ENCODE measurements at regions of chr13 and their contacts with region 1.

Region 1: DNA sequence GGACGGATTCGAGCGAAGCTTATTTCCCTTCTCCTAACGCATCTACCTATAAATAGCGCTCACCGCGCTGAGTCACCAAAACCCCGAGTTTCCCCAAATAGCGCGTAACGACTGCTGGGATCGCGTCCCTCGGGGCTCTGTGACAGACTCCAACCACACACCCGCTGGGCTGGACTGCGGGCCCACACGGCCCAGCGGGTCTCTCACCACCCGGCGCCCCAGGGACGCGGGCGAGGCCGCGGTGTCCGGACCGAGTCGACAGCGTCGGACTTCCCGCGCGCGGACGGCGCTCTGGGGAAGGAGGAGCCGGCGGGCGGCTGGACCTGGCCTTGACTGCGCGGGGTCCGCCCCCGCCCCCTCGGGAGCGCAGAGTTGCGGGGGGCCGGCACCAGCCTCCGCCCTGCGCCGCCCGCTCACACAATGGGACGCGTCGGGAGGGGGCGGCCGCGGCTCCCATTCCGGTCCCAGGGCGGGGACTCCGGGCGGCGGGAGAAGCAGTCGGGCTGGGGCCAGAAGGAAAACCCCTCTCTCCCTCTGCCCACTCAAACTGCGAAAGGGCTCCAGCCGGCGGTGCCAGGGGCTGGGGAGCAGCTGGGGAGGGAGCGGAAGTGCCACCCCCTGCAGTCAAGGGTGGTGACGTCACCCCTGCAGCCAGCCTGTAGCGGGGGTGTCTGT is 108.8 kb downstream of the KCNRG start:
- DNase-seq: peak; percentile 62
- H3K4me3 Mint-ChIP-seq: peak overlapping the region; percentile 88
- H3K27ac Mint-ChIP-seq: peak overlapping the region; percentile 91
- H3K4me1 Mint-ChIP-seq: peaks cover 50% of the 10 kb centered on the region
- H3K27me3 Mint-ChIP-seq: peaks cover 1% of the 10 kb centered on the region

Region 2: DNA sequence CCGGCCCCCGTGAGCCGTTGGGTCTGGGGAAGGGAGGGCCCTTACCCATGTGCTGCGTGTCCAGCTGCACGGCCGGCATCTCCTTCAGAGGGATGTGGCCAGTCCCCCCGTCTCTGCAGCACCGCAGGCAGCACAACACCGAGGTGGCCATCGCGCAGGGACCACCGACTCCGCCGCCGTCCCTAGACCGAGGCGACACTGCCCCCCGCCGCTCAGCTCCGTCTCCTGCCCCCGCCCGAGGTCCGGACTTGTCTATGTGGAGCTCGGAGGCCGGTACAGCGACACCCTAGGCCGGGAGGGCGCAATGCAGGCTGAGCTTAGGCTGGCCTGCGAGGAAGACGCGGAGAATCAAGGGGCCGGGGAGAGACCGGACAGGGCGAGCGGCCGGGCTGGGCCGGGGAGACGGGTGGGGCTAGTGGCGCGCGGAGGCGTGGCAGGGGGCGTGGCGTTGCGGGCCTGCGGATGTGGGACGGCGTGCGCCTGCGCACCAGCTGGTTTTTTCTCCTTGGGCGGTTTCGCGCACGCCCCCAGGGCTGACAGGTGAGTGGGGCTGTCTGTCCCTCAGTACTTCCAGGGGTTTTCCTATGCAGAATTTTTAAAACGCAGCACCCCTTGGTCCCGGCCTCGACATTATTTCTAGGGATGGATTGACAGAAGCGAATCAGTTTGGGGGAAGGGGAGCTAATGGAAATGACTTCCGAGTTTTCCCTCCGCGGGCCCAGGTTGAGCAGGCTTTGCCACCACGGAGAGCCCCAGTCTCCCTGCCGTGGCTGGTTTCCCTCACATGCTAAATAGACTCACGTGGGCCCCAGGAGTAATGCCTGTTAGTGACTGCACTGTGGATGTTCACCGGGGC is 187.7 kb before region 1 on chr13 and contains the start of gene SPRYD7:
- intact Hi-C with region 1: loop called (anchors 2 kb)
- DNase-seq: peak; percentile 92
- H3K4me3 Mint-ChIP-seq: peak within 1 kb of the TSS; percentile 94
- H3K27ac Mint-ChIP-seq: peak within 1 kb of the TSS; percentile 87
- H3K4me1 Mint-ChIP-seq: peaks cover 11% of the 10 kb centered on the region
- H3K27me3 Mint-ChIP-seq: peaks cover 22% of the 10 kb centered on the region
- total RNA-seq, gene SPRYD7: 6.9 and 7.0 TPM in 2 replicates

Region 3: DNA sequence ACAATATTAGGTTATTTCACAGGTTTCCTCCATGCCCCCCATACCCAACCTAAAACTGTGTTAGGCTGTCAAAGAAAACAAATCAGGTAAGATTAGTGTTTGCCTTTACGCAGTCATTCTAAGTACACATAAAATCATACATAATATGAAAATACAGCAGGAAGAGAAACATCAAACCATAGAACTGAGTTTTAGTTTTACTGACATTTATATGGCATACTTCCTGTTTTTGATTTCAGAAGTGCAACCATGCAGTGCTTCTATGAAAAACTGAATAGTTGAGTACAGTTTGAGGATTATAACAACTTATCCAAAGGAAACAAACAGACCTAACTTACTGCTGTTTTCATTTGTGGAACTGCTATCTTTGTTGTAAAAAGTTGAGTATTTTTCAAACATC is 17.4 kb before region 1 on chr13:
- intact Hi-C with region 1: loop called (anchors 2 kb)
- DNase-seq: no peak
- H3K4me3 Mint-ChIP-seq: peak overlapping the region; percentile 1
- H3K27ac Mint-ChIP-seq: peak overlapping the region; percentile 2
- H3K4me1 Mint-ChIP-seq: peaks cover 45% of the 10 kb centered on the region
- H3K27me3 Mint-ChIP-seq: no peaks in the 10 kb centered on the region